Left ventricle myocardium inferior (tissue), 1 donor: ENCODE measurements at regions of chr14 and their contacts with region 1.

Region 1: DNA sequence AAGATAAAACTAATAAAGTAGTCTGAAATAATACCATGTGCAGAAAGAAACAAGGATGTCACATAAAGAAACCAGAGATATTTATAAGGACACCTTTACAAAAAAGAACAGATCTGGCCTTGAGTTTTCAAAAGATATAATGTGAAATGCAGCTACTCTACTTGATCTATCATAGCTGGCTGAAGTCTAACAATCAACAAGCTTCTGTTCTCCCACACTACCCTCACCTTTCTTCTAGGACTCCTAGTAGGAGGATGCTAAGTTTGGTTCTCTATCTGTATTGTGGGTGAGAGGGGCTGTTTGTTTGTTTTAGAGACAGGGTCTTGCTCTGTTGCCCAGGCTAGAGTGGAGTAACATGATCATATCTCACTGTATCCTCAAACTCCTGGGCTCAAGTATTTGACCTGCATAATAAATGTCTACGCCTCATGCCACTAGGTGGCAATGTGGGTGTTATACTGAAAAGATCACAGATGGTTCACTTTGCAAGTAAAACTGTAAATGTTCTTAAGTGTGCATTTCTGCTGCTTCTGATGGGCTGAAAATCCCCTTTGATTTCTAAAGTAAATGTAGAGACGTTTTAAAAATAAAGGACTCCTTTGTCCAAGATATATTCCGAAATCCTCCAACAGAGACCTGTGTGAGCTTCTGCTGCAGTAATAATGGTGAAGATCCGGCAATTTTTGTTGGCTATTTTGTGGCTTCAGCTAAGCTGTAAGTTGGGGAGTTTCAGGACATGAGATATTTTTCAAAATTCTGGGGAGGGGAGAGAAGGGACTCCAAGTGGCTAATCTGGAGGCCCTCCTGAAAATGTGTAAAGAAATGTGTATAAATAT is 269.3 kb downstream of the DAD1 start:
- DNase-seq: no peak
- H3K4me3 ChIP-seq: no peak overlapping the region
- H3K27ac ChIP-seq: no peak overlapping the region
- H3K4me1 ChIP-seq: no peaks in the 10 kb centered on the region
- H3K27me3 ChIP-seq: peaks cover 8% of the 10 kb centered on the region
- CTCF ChIP-seq: peak; percentile 72

Region 2: DNA sequence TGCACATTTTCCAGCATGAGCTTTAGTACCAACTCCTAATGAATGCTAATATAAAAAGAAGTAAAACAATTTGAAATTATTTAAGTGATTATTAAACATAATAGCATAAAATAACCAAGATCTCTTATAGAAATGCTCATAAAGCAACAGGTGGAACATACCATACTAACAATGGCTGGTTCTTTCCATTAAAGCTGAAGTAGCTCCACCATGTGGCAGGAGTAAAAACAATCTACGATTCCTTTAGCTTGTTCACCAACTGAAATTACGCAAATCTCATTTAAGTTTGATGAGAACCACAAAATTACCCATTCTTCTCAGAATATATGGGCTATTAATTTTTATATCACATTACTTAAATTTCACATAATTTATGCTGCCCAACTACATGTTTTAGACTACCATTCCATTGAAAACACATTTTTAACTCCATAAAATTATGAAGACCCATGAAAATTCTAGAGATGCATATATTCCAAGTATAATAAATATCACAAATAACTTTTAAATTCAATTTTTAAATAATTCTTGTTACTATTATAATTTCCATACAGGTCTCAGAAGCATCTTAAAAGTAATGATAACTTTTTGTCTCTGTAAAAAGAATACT is 55.7 kb after region 1 on chr14:
- intact Hi-C with region 1: loop called (anchors 5 kb)
- DNase-seq: no peak
- H3K4me3 ChIP-seq: no peak overlapping the region
- H3K27ac ChIP-seq: no peak overlapping the region
- H3K4me1 ChIP-seq: peaks cover 15% of the 10 kb centered on the region
- H3K27me3 ChIP-seq: no peaks in the 10 kb centered on the region
- CTCF ChIP-seq: peak; percentile 72